Thyroid gland (tissue), 4 donors: ENCODE measurements at regions of chrX and their contacts with region 1.

Region 1: DNA sequence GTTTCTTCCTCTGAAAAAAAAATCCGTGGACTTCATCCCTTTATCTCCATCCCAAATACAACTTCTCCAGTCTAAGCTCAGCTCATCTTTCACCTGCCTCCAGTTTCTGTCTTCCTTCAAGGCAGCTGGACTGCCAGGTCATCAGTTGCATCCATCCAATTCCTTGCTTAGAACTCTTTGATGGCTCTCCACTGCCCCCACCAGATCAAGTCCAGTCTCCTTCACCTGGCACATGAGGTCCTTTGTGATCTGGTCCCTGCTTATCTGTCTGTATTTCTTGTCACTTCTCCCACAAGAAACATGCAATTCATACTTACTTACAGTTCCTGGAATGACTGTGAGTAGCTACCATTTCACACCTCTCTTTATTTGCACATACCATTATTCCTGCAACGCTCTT is 33.8 kb downstream of the OTUD6A start:
- DNase-seq: peak in 1 of 2 donors; percentile 3
- H3K4me3 ChIP-seq: no peak overlapping the region
- H3K27ac ChIP-seq: no peak overlapping the region
- H3K4me1 ChIP-seq: no peaks in the 10 kb centered on the region
- H3K27me3 ChIP-seq: no peaks in the 10 kb centered on the region
- CTCF ChIP-seq: no peak
- POLR2A ChIP-seq: no peak

Region 2: GRCh38 chrX:69493193-69493592 is 602.9 kb before region 1 on chrX:
- intact Hi-C with region 1: loop called (anchors 5 kb)
- DNase-seq: peak; percentile 36 to 54
- H3K4me3 ChIP-seq: no peak overlapping the region
- H3K27ac ChIP-seq: no peak overlapping the region
- H3K4me1 ChIP-seq: no peaks in the 10 kb centered on the region
- H3K27me3 ChIP-seq: no peaks in the 10 kb centered on the region
- CTCF ChIP-seq: peak in 4 of 6 experiments; percentile 33 to 67 (median 52)
- POLR2A ChIP-seq: no peak

Region 3: GRCh38 chrX:69538321-69538876 is 557.7 kb before region 1 on chrX:
- intact Hi-C with region 1: loop called (anchors 10 kb)
- DNase-seq: peak; percentile 62 to 75
- H3K4me3 ChIP-seq: peak overlapping the region in 1 of 3 donors; percentile 21
- H3K27ac ChIP-seq: no peak overlapping the region
- H3K4me1 ChIP-seq: peaks cover 0 to 53% of the 10 kb centered on the region in 2 donors
- H3K27me3 ChIP-seq: no peaks in the 10 kb centered on the region
- CTCF ChIP-seq: peak in 5 of 6 experiments; percentile 34 to 70 (median 56)
- POLR2A ChIP-seq: no peak

Region 4: GRCh38 chrX:70030301-70030767 is 65.7 kb before region 1 on chrX:
- intact Hi-C with region 1: loop called (anchors 10 kb)
- DNase-seq: peak in 1 of 2 donors; percentile 29
- H3K4me3 ChIP-seq: no peak overlapping the region
- H3K27ac ChIP-seq: no peak overlapping the region
- H3K4me1 ChIP-seq: no peaks in the 10 kb centered on the region
- H3K27me3 ChIP-seq: no peaks in the 10 kb centered on the region
- CTCF ChIP-seq: peak; percentile 25 to 62 (median 52)
- POLR2A ChIP-seq: no peak

Region 5: DNA sequence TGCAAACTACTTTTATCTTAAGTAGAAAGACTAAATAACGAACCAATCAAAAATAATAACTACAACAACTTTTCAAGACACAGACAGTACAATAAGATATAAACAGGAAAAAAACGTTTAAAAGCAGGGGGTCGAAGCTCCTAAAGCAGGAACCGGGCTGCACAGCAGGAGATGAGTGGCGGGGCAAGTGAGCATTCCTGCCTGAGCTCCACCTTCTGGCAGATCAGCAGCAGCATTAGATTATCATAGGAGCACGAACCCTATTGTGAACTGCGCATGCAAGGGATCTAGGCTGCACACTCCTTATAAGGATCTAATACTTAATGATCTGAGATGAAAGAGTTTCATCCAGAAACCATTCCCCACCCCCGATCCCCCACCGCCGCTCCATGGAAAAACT is 666.2 kb after region 1 on chrX:
- intact Hi-C with region 1: no loop called
- DNase-seq: no peak
- H3K4me3 ChIP-seq: no peak overlapping the region
- H3K27ac ChIP-seq: no peak overlapping the region
- H3K4me1 ChIP-seq: no peaks in the 10 kb centered on the region
- H3K27me3 ChIP-seq: peaks cover 3% of the 10 kb centered on the region
- CTCF ChIP-seq: no peak
- POLR2A ChIP-seq: no peak